Activated B cell treated with CpG ODN at 0.5 μM for 24 hours (primary cell): ENCODE measurements at regions of chr10 and their contacts with region 1.

Region 1: GRCh38 chr10:62732841-62733653 is 71.5 kb upstream of the ADO start:
- DNase-seq: peak; percentile 46
- ATAC-seq: peak; percentile 77
- H3K4me3 Mint-ChIP-seq: peak overlapping the region; percentile 62
- H3K27ac Mint-ChIP-seq: no peak overlapping the region
- H3K4me1 Mint-ChIP-seq: peaks cover 2% of the 10 kb centered on the region
- H3K27me3 Mint-ChIP-seq: no peaks in the 10 kb centered on the region
- CTCF ChIP-seq: no peak

Region 2: DNA sequence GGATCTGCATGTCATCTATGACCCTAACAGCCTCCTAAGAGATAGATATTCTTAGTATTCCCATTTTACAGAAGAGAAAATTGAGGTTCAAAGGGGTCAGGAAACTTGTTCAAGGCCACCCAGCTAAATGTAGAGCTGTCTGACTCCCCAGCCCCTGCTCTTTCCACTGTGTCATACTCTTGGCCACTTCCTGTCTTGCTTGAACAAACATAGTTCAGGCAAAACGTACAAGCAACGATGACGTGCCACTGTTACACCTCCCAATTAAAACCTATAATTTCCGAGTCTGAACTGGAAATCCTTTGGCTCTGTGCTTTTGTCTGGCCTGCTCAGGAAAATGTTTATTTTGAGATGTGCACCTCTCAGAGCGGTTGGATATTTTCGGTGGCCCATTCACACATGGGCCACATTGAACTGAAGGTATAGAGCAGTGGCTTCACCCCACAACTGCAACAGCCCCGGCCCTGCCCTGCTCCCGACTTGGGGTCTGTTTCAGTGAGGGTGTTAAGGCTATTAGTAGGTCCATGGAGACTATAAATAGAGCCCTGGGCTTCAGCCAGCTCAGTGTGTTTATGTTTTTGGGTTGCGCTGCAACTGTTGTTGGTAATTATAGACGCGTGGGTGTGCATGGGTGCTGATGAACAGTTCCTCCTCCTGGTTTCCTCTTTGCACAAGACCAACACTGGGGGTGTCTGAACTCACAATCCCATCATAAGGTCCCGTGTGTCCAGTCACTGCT is 100.8 kb before region 1 on chr10:
- CTCF ChIA-PET with region 1: interaction called, 3 read pairs
- POLR2A ChIA-PET with region 1: interaction called, 7 read pairs
- intact Hi-C with region 1: loop called (anchors 1 kb)
- DNase-seq: no peak
- ATAC-seq: peak; percentile 81
- H3K4me3 Mint-ChIP-seq: peak overlapping the region; percentile 83
- H3K27ac Mint-ChIP-seq: peak overlapping the region; percentile 98
- H3K4me1 Mint-ChIP-seq: peaks cover 58% of the 10 kb centered on the region
- H3K27me3 Mint-ChIP-seq: no peaks in the 10 kb centered on the region
- CTCF ChIP-seq: no peak

Region 3: DNA sequence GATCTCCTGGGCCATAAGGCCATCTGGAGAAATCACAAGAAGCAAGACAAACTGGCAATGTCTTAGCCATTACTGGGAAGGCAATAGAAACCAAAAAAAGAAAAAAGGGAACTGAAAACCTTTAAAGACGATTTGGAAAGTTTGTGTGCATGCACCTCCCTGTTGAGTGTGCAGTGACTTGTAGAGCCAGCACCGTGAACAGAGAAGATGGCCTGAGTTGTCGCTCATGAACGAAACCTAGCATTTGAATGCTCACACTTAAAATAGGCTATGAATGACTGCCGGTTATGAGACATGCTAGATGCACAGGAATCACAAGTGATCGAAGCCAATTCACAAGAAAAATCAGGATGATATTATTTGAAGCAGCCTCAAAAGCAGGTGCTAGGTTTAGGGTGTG is 79.8 kb before region 1 on chr10:
- CTCF ChIA-PET with region 1: no interaction called
- POLR2A ChIA-PET with region 1: interaction called, 6 read pairs
- intact Hi-C with region 1: loop called (anchors 1 kb)
- DNase-seq: no peak
- ATAC-seq: peak; percentile 92
- H3K4me3 Mint-ChIP-seq: peak overlapping the region; percentile 55
- H3K27ac Mint-ChIP-seq: peak overlapping the region; percentile 87
- H3K4me1 Mint-ChIP-seq: peaks cover 66% of the 10 kb centered on the region
- H3K27me3 Mint-ChIP-seq: peaks cover 1% of the 10 kb centered on the region
- CTCF ChIP-seq: no peak

Region 4: DNA sequence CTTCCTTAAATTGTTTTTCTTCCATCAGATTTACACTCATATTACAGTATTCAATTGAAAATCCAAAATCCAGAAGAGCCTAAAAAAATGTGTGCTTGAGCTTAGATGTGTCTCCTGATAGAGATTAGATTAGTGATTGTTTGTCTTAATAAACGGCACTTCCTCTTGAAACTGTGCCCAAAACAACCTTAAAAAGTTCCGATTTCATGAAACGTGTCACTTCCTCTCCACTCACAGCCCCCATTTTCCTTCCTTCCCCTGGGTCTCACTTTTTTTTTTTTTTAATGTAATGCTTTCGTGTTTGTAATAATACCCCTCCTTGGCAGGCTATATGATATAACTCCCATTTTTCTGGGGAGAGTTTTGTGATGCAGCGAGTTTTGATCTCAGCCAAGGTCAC is 43.3 kb before region 1 on chr10:
- CTCF ChIA-PET with region 1: no interaction called
- POLR2A ChIA-PET with region 1: interaction called, 8 read pairs
- intact Hi-C with region 1: loop called (anchors 2 kb)
- DNase-seq: no peak
- ATAC-seq: peak; percentile 76
- H3K4me3 Mint-ChIP-seq: peak overlapping the region; percentile 70
- H3K27ac Mint-ChIP-seq: peak overlapping the region; percentile 75
- H3K4me1 Mint-ChIP-seq: peaks cover 43% of the 10 kb centered on the region
- H3K27me3 Mint-ChIP-seq: no peaks in the 10 kb centered on the region
- CTCF ChIP-seq: no peak

Region 5: GRCh38 chr10:62760401-62760800 is 27.4 kb after region 1 on chr10:
- CTCF ChIA-PET with region 1: no interaction called
- POLR2A ChIA-PET with region 1: interaction called, 3 read pairs
- intact Hi-C with region 1: loop called (anchors 1 kb)
- DNase-seq: no peak
- ATAC-seq: no peak
- H3K4me3 Mint-ChIP-seq: no peak overlapping the region
- H3K27ac Mint-ChIP-seq: no peak overlapping the region
- H3K4me1 Mint-ChIP-seq: peaks cover 20% of the 10 kb centered on the region
- H3K27me3 Mint-ChIP-seq: peaks cover 3% of the 10 kb centered on the region
- CTCF ChIP-seq: no peak

Region 6: DNA sequence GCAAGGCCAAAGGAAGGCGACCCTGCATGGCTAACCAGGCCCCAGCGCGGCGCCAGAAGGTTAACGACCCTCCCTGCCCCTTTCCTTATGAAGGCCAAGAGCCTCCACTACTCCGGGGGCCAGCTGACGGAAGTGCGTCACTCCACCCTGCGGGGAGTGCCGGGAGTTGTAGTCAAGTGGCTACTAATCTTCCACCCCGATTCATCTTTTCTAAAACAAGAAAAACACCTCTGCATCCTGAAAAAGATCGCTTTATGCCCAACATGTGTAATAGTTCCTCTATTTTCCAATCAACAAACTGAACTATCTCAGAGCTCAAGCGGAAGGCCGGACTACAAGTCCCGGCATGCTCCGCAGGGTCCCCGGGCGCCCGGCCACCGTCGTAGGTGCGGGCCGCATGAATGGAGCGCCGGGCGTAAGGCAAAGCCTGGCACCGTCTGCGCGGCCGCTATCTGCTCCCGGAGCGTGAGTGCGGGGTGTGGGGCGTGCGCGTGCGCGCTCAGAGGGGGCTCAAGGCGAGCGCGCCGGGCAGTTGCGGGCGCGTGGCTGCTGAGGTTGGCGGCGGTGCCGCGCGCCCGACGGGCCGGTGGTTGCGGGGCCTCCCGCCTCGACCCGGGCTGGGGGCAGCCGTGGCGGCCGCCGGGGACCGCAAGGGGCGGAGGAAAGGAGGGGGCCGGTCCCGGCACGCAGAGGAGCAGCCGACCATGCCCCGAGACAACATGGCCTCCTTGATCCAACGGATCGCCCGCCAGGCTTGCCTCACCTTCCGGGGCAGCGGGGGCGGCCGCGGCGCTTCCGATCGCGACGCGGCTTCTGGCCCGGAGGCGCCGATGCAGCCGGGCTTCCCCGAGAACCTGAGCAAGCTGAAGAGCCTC is 71.5 kb after region 1 on chr10 and contains the start of gene ADO:
- CTCF ChIA-PET with region 1: interaction called, 3 read pairs
- POLR2A ChIA-PET with region 1: interaction called, 8 read pairs
- intact Hi-C with region 1: loop called (anchors 1 kb)
- DNase-seq: peak; percentile 77
- ATAC-seq: peak; percentile 87
- H3K4me3 Mint-ChIP-seq: peak within 1 kb of the TSS; percentile 95
- H3K27ac Mint-ChIP-seq: peak within 1 kb of the TSS; percentile 99
- H3K4me1 Mint-ChIP-seq: peaks cover 41% of the 10 kb centered on the region
- H3K27me3 Mint-ChIP-seq: no peaks in the 10 kb centered on the region
- CTCF ChIP-seq: no peak
- total RNA-seq, gene ADO: 21.6 and 21.7 TPM in 2 replicates

Region 7: GRCh38 chr10:62946278-62946677 is 213.2 kb after region 1 on chr10:
- CTCF ChIA-PET with region 1: no interaction called
- POLR2A ChIA-PET with region 1: no interaction called
- intact Hi-C with region 1: no loop called
- DNase-seq: no peak
- ATAC-seq: no peak
- H3K4me3 Mint-ChIP-seq: no peak overlapping the region
- H3K27ac Mint-ChIP-seq: no peak overlapping the region
- H3K4me1 Mint-ChIP-seq: no peaks in the 10 kb centered on the region
- H3K27me3 Mint-ChIP-seq: peaks cover 11% of the 10 kb centered on the region
- CTCF ChIP-seq: no peak